ENCODE measurements at regions of chr10 and their contacts with region 1.

Region 1: GRCh38 chr10:101653536-101653935 is 41.4 kb downstream of the FBXW4 start:
- DNase-seq: no peak
- ATAC-seq: no peak
- H3K4me3 ChIP-seq: no peak overlapping the region
- H3K27ac ChIP-seq: no peak overlapping the region
- H3K4me1 ChIP-seq: no peaks in the 10 kb centered on the region
- H3K27me3 ChIP-seq: no peaks in the 10 kb centered on the region
- CTCF ChIP-seq: no peak
- POLR2A ChIP-seq: no peak
- RAD21 ChIP-seq: no peak

Region 2: GRCh38 chr10:101130984-101131961 is 522.3 kb before region 1 on chr10 and contains the start of gene TLX1:
- CTCF ChIA-PET with region 1: no interaction called
- POLR2A ChIA-PET with region 1: no interaction called
- RAD21 ChIA-PET with region 1: no interaction called
- intact Hi-C with region 1: no loop called
- DNase-seq: no peak
- ATAC-seq: no peak
- H3K4me3 ChIP-seq: no peak within 1 kb of the TSS
- H3K27ac ChIP-seq: no peak within 1 kb of the TSS
- H3K4me1 ChIP-seq: peaks cover 9 to 11% of the 10 kb centered on the region in 2 experiments
- H3K27me3 ChIP-seq: peaks cover 7% of the 10 kb centered on the region; the same call in 1 of the 2 replicates
- CTCF ChIP-seq: no peak
- POLR2A ChIP-seq: no peak
- RAD21 ChIP-seq: no peak
- total RNA-seq, gene TLX1: not detected

Region 3: DNA sequence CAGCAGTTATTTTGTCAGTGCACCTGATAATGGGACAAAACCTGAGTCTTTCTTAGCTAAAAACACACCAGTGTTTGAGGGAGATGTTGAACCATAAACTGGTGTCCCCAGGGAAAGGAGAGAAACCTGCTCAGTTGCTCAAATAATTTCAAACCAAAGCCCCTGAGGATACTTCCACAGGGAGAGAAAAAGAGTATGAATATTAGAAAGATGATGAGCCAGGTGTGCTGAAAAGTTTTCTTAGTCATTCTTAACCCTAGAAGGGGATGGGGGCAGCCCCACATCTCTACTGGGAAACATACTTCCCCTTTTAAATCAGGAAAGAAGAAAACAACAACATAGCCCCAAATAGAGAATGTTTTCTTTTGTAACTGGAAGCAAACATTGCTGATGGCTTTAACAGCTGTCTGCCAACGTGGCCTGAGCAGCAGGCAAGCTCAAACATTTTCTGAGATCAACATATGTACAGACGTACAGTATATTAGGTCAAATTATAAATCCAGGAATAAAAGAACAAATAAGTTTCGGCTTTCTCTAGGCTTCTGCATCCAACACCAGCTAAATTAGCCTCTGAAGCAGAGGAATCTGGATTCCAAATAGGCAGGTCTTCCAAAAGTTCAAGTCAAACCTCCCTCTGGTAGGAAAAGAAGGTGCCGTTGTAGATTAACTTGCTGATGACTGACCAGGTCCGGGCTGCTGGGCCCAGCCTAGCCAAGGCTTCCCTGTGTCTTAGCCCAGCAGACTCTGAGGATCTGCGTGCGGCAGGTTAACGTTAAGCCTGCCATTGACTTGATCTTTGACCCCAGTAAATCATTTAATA is 72.0 kb after region 1 on chr10:
- CTCF ChIA-PET with region 1: no interaction called
- POLR2A ChIA-PET with region 1: no interaction called
- RAD21 ChIA-PET with region 1: no interaction called
- intact Hi-C with region 1: loop called (anchors 2 kb)
- DNase-seq: no peak
- ATAC-seq: no peak
- H3K4me3 ChIP-seq: no peak overlapping the region
- H3K27ac ChIP-seq: no peak overlapping the region
- H3K4me1 ChIP-seq: no peaks in the 10 kb centered on the region
- H3K27me3 ChIP-seq: no peaks in the 10 kb centered on the region
- CTCF ChIP-seq: no peak
- POLR2A ChIP-seq: no peak
- RAD21 ChIP-seq: no peak

Measured in HCT116 (cell line).